ENCODE measurements at regions of chr5 and their contacts with region 1.

Region 1: GRCh38 chr5:139765409-139766217 is 30.0 kb upstream of the PSD2 start:
- DNase-seq: no peak
- H3K4me3 ChIP-seq: peak overlapping the region; percentile 44 to 61
- H3K27ac ChIP-seq: no peak overlapping the region
- H3K4me1 ChIP-seq: peaks cover 9% of the 10 kb centered on the region
- H3K27me3 ChIP-seq: no peaks in the 10 kb centered on the region
- CTCF ChIP-seq: peak; percentile 99 to 100 (median 100)
- POLR2A ChIP-seq: no peak

Region 2: DNA sequence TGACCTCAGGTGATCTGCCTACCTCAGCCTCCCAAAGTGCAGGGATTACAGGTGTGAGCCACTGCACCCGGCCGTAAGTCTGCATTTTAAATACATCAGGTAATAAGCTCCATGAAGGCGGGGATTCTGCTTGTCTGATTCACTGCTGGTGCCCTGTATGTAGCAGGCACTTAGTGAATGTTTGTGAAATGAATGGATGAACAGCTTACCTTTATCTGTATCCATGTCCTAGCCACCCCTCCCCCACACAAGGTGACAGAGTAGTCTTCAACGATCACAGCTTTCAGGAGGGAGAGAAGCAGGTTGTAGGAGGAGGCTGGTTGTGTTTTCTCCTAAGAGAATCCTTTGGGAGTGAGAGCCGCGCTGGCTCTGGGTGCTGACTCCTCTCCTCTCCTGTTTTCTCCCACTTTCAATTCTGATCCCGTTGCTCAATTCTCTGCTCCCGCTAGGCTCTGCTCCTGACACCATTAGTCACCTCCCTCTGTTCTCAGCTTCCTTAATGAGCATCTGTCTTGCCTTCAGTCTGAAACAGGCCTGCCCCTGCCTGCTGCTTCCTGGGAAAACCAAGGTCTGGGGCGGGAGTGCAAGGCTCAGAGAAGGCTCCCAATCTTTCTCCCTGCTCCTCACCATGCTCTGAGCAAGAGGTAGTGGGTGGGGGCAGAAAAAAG is 1101.2 kb before region 1 on chr5:
- intact Hi-C with region 1: no loop called
- DNase-seq: no peak
- H3K4me3 ChIP-seq: no peak overlapping the region
- H3K27ac ChIP-seq: no peak overlapping the region
- H3K4me1 ChIP-seq: peaks cover 30% of the 10 kb centered on the region
- H3K27me3 ChIP-seq: no peaks in the 10 kb centered on the region
- CTCF ChIP-seq: no peak
- POLR2A ChIP-seq: no peak

Region 3: GRCh38 chr5:139301808-139302499 is 463.7 kb before region 1 on chr5:
- intact Hi-C with region 1: no loop called
- DNase-seq: no peak
- H3K4me3 ChIP-seq: no peak overlapping the region
- H3K27ac ChIP-seq: no peak overlapping the region
- H3K4me1 ChIP-seq: peaks cover 100% of the 10 kb centered on the region
- H3K27me3 ChIP-seq: no peaks in the 10 kb centered on the region
- CTCF ChIP-seq: no peak
- POLR2A ChIP-seq: no peak

Region 4: GRCh38 chr5:139565411-139566305 is 200.0 kb before region 1 on chr5:
- intact Hi-C with region 1: loop called (anchors 5 kb)
- DNase-seq: no peak
- H3K4me3 ChIP-seq: no peak overlapping the region
- H3K27ac ChIP-seq: peak overlapping the region; percentile 6
- H3K4me1 ChIP-seq: peaks cover 83% of the 10 kb centered on the region
- H3K27me3 ChIP-seq: no peaks in the 10 kb centered on the region
- CTCF ChIP-seq: no peak
- POLR2A ChIP-seq: no peak